Panc1 (cell line): ENCODE measurements at regions of chr5 and their contacts with region 1.

Region 1: GRCh38 chr5:131382407-131383395 is 118.8 kb downstream of the CDC42SE2 start:
- DNase-seq: peak; percentile 58
- ATAC-seq: peak; percentile 82
- H3K4me3 ChIP-seq: no peak overlapping the region
- H3K27ac ChIP-seq: peak overlapping the region; percentile 24
- H3K4me1 ChIP-seq: peaks cover 70% of the 10 kb centered on the region
- H3K27me3 ChIP-seq: no peaks in the 10 kb centered on the region
- CTCF ChIP-seq: peak; percentile 81

Region 2: GRCh38 chr5:131129306-131129705 is 253.4 kb before region 1 on chr5:
- CTCF ChIA-PET with region 1: interaction called, 10 read pairs
- POLR2A ChIA-PET with region 1: no interaction called
- in situ Hi-C with region 1: no loop called
- intact Hi-C with region 1: no loop called
- DNase-seq: no peak
- ATAC-seq: no peak
- H3K4me3 ChIP-seq: no peak overlapping the region
- H3K27ac ChIP-seq: no peak overlapping the region
- H3K4me1 ChIP-seq: no peaks in the 10 kb centered on the region
- H3K27me3 ChIP-seq: no peaks in the 10 kb centered on the region
- CTCF ChIP-seq: no peak

Region 3: GRCh38 chr5:131270809-131271208 is 111.9 kb before region 1 on chr5:
- CTCF ChIA-PET with region 1: interaction called, 7 read pairs
- POLR2A ChIA-PET with region 1: interaction called, 6 read pairs
- in situ Hi-C with region 1: no loop called
- intact Hi-C with region 1: loop called (anchors 5 kb)
- DNase-seq: no peak
- ATAC-seq: peak; percentile 82
- H3K4me3 ChIP-seq: no peak overlapping the region
- H3K27ac ChIP-seq: peak overlapping the region; percentile 64
- H3K4me1 ChIP-seq: peaks cover 18% of the 10 kb centered on the region
- H3K27me3 ChIP-seq: no peaks in the 10 kb centered on the region
- CTCF ChIP-seq: no peak